ENCODE measurements at regions of chr11 and their contacts with region 1.

Region 1: GRCh38 chr11:21736404-21736803 is 456.5 kb upstream of the ANO5 start:
- DNase-seq: no peak
- H3K4me3 ChIP-seq: no peak overlapping the region
- H3K27ac ChIP-seq: no peak overlapping the region
- H3K4me1 ChIP-seq: no peaks in the 10 kb centered on the region
- H3K27me3 ChIP-seq: no peaks in the 10 kb centered on the region
- CTCF ChIP-seq: no peak
- EP300 ChIP-seq: no peak
- POLR2A ChIP-seq: no peak

Region 2: GRCh38 chr11:21774212-21774611 is 37.8 kb after region 1 on chr11:
- intact Hi-C with region 1: loop called in 1 of 4 experiments (anchors 1 kb)
- DNase-seq: no peak
- H3K4me3 ChIP-seq: no peak overlapping the region
- H3K27ac ChIP-seq: no peak overlapping the region
- H3K4me1 ChIP-seq: no peaks in the 10 kb centered on the region
- H3K27me3 ChIP-seq: no peaks in the 10 kb centered on the region
- CTCF ChIP-seq: no peak
- EP300 ChIP-seq: no peak
- POLR2A ChIP-seq: no peak

Region 3: GRCh38 chr11:21794306-21794705 is 57.9 kb after region 1 on chr11:
- intact Hi-C with region 1: no loop called
- DNase-seq: no peak
- H3K4me3 ChIP-seq: no peak overlapping the region
- H3K27ac ChIP-seq: no peak overlapping the region
- H3K4me1 ChIP-seq: no peaks in the 10 kb centered on the region
- H3K27me3 ChIP-seq: no peaks in the 10 kb centered on the region
- CTCF ChIP-seq: no peak
- EP300 ChIP-seq: no peak
- POLR2A ChIP-seq: no peak

Region 4: DNA sequence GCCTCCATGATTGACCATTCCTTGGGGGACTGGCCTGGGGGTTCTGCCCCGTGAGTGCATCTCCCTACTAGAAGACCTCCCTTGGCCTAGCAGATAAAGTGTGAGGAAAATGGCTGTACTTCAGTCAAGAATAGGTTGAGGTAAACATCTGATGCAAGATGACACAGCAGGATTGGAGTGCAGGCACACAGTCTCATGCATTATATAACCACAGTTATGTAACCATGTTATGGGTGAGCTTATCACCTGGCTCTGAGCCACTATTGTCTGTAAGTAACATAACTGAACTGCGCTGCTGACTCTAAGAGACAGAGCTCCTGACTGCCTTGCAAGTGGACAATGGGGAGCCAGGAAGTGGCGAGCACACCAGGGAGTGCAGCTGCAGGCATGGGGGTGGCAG is 77.8 kb after region 1 on chr11:
- intact Hi-C with region 1: no loop called
- DNase-seq: no peak
- H3K4me3 ChIP-seq: no peak overlapping the region
- H3K27ac ChIP-seq: no peak overlapping the region
- H3K4me1 ChIP-seq: no peaks in the 10 kb centered on the region
- H3K27me3 ChIP-seq: no peaks in the 10 kb centered on the region
- CTCF ChIP-seq: no peak
- EP300 ChIP-seq: no peak
- POLR2A ChIP-seq: no peak

Region 5: DNA sequence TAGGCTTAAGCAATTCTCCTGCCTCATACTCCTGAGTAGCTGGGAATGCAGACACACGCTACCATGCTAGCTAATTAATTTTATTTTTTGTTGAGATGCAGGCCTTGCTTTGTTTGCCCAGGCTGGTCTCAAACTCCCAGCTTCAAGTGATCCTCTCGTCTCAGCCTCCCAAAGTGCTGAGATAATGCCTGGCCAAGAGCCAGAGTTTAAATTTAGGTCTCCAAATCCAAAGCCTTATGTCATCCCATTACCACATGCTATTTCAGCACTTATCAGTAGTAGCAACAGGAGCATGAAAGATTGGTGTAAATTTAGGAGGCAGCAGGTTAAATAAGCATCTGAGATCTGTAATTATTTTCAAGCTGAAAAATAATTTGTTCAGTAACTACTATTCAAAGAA is 130.4 kb after region 1 on chr11:
- intact Hi-C with region 1: no loop called
- DNase-seq: no peak
- H3K4me3 ChIP-seq: no peak overlapping the region
- H3K27ac ChIP-seq: no peak overlapping the region
- H3K4me1 ChIP-seq: no peaks in the 10 kb centered on the region
- H3K27me3 ChIP-seq: no peaks in the 10 kb centered on the region
- CTCF ChIP-seq: no peak
- EP300 ChIP-seq: no peak
- POLR2A ChIP-seq: no peak